ENCODE measurements at regions of chr2 and their contacts with region 1.

Region 1: DNA sequence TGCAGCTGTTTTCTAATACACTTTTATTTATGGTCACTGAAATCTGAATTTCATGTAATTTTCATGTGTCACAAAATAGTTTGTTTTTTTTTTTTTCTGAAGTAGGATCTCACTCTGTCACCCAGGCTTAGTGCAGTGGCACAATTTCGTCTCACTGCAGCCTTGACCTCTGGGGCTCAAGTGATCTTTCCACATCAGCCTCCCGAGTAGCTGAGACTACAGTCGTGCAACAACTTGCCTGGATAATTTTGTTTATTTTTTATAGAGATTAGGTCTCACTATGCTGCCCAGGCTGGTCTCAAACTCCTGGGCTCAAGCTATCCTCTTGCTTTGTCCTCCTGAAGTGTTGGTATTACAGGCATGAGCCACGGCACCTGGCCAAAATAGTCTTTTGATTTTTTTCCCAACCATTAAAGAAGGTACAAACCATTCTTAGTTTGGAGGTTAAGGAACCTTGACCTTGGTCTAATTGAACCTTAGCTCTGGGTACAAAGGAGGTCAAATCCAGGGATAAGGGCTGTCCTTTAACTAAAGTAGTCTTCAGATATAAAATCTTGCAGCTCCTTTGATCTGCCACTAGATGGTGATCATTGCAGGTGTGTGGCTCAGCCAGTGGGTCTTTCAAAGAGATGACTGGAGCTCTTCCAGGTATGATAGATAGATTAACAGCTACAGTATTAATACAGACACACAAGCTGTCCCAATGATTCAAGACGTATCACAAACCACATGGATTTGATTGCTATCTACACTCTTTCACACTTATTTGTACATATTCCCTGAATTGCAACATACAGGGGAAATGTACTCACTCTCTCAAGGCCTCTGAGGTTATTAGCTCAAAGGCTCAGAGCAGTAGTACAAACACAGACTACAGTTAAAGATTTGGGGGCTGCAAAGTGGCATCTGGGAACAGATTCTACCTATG is 4.7 kb upstream of the KRCC1 start:
- DNase-seq: peak; percentile 22
- ATAC-seq: peak; percentile 62
- H3K4me3 Mint-ChIP-seq: no peak overlapping the region
- H3K27ac Mint-ChIP-seq: no peak overlapping the region
- H3K4me1 Mint-ChIP-seq: peaks cover 16% of the 10 kb centered on the region
- H3K27me3 Mint-ChIP-seq: no peaks in the 10 kb centered on the region
- CTCF ChIP-seq: 0 out of 2 replicates have a peak, but pooled peaks have one; percentile 23

Region 2: GRCh38 chr2:88011011-88011410 is 49.2 kb before region 1 on chr2:
- CTCF ChIA-PET with region 1: interaction called, 15 read pairs
- POLR2A ChIA-PET with region 1: interaction called, 5 read pairs
- DNase-seq: no peak
- ATAC-seq: no peak
- H3K4me3 Mint-ChIP-seq: no peak overlapping the region
- H3K27ac Mint-ChIP-seq: no peak overlapping the region
- H3K4me1 Mint-ChIP-seq: peaks cover 14% of the 10 kb centered on the region
- H3K27me3 Mint-ChIP-seq: no peaks in the 10 kb centered on the region
- CTCF ChIP-seq: no peak

Region 3: DNA sequence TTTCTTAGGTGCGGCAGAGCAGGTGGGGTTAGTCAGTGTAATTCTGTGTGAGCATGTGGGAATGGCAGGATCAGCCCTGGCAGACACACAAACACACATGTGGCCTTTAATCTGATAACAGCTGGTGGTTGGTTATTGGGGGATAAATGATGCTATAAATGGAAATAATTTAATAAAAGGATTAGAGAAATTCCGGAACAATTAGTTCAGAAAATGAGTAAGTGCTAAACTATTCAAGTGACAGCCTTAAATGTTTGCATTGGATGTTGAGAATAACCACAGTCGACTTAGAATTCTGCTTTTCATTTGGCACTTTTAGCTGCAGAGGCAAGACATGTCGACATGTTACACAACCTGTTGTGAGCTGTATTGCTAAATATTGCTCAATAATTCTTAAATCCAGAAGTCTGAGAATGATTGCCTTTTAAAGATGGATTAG is 14.6 kb after region 1 on chr2:
- CTCF ChIA-PET with region 1: interaction called, 36 read pairs
- POLR2A ChIA-PET with region 1: interaction called, 3 read pairs
- DNase-seq: no peak
- ATAC-seq: no peak
- H3K4me3 Mint-ChIP-seq: no peak overlapping the region
- H3K27ac Mint-ChIP-seq: no peak overlapping the region
- H3K4me1 Mint-ChIP-seq: peaks cover 5% of the 10 kb centered on the region; the same call in 1 of the 2 replicates
- H3K27me3 Mint-ChIP-seq: no peaks in the 10 kb centered on the region
- CTCF ChIP-seq: no peak

Region 4: DNA sequence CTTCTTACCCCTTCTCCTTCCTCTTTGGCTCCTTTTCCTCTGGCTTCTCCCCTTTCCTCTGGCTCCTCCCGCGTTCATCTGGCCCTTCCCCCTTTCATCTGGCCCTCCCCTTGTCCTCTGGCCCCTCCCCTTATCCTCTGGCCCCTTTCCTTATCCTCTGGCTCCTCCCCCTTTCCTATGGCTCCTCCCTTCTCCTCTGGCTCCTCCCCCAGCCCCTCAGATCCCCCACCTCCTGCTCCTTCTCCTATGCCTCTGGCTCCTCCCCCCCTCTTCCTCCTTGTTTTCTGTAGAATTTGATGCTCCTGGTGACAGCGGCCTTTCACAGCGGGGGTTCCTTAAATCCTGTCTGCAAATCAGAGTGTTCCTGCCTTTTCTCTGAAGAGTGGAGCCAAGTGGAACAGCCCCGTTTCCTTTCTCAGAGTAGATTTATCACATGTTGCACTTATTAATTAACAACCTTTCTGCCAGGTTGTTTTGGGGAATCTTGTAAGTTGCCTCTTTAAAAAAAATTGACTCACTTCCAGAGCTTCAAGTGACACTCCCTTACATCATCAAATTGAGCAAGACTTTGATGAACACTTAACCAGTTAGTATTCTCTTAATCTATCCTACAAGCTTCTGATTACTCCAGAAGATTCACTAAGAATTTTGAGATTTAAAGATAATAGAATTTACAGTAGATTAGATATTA is 39.7 kb after region 1 on chr2:
- CTCF ChIA-PET with region 1: interaction called, 11 read pairs
- POLR2A ChIA-PET with region 1: no interaction called
- DNase-seq: peak; percentile 95
- ATAC-seq: peak; percentile 100
- H3K4me3 Mint-ChIP-seq: no peak overlapping the region
- H3K27ac Mint-ChIP-seq: no peak overlapping the region
- H3K4me1 Mint-ChIP-seq: peaks cover 25% of the 10 kb centered on the region
- H3K27me3 Mint-ChIP-seq: peaks cover 4% of the 10 kb centered on the region; the same call in 1 of the 2 replicates
- CTCF ChIP-seq: no peak

Region 5: GRCh38 chr2:88144914-88145497 is 84.8 kb after region 1 on chr2:
- CTCF ChIA-PET with region 1: interaction called, 17 read pairs
- POLR2A ChIA-PET with region 1: no interaction called
- DNase-seq: no peak
- ATAC-seq: no peak
- H3K4me3 Mint-ChIP-seq: no peak overlapping the region
- H3K27ac Mint-ChIP-seq: no peak overlapping the region
- H3K4me1 Mint-ChIP-seq: no peaks in the 10 kb centered on the region
- H3K27me3 Mint-ChIP-seq: peaks cover 12% of the 10 kb centered on the region; the same call in 1 of the 2 replicates
- CTCF ChIP-seq: no peak

Region 6: GRCh38 chr2:88180606-88181240 is 120.5 kb after region 1 on chr2:
- CTCF ChIA-PET with region 1: interaction called, 33 read pairs
- POLR2A ChIA-PET with region 1: no interaction called
- DNase-seq: no peak
- ATAC-seq: no peak
- H3K4me3 Mint-ChIP-seq: no peak overlapping the region
- H3K27ac Mint-ChIP-seq: no peak overlapping the region
- H3K4me1 Mint-ChIP-seq: peaks cover 14% of the 10 kb centered on the region
- H3K27me3 Mint-ChIP-seq: peaks cover 8% of the 10 kb centered on the region
- CTCF ChIP-seq: no peak